AG04449 (cell line): ENCODE measurements at regions of chr12 and their contacts with region 1.

Region 1: DNA sequence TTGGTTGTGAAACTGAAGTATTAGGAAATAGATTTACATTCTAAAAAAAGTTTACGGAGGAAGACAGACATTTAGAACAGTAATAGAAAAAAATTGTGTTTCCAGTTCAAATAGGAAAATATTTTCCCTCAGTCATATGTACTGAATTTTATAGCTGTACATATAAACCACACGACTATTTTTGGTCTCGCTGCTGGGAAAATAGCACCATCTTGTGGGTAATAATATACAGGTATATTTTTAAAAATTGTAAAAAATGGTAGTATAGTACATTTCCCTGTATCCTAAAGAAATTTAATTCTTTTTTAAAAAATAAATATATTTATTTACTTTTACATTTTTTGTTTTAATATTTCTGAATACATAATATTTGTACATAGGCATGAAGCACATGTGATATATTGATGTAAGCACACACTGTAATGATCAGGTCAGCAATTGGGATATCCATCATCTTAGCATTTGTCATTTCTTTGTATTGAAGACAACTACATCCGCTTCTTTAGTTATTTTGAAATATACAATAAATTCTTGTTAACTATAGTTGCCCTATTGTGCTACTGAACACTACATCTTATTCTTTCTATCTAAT is 168.6 kb downstream of the ALX1 start:
- DNase-seq: no peak
- H3K4me3 ChIP-seq: no peak overlapping the region
- CTCF ChIP-seq: peak; percentile 12

Region 2: GRCh38 chr12:85076688-85077430 is 371.8 kb before region 1 on chr12:
- CTCF ChIA-PET with region 1: interaction called, 13 read pairs
- POLR2A ChIA-PET with region 1: no interaction called
- DNase-seq: peak; percentile 64
- H3K4me3 ChIP-seq: no peak overlapping the region
- CTCF ChIP-seq: peak; percentile 32